Psoas muscle (tissue), 8 donors: ENCODE measurements at regions of chr17 and their contacts with region 1.

Region 1: DNA sequence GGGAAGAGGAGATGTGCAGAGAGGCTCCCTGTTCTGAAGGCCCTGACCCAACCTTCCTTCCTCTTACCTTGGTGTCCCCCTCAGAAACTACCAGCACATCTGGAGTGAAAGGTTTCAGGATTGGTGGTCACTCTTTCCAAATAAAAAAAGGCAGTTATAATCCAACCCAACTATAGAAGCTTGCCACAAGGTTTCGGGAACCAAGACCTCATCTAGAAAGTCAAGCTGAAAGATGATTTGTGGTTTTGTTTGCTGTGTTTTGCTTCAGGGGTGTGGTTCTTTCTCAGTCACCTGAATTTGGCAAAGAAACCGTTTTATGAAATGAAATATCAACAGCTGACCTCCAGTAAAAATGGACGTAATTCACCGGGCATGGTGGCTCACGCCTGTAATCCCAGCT is 19.3 kb downstream of the SHMT1 start:
- DNase-seq: no peak
- ATAC-seq: no peak
- H3K4me3 ChIP-seq: no peak overlapping the region
- H3K27ac ChIP-seq: no peak overlapping the region
- H3K4me1 ChIP-seq: no peaks in the 10 kb centered on the region
- H3K27me3 ChIP-seq: no peaks in the 10 kb centered on the region
- CTCF ChIP-seq: no peak

Region 2: GRCh38 chr17:18093616-18094408 is 250.2 kb before region 1 on chr17:
- intact Hi-C with region 1: no loop called
- DNase-seq: peak; percentile 63 to 92
- ATAC-seq: peak; percentile 76 to 93 (median 88)
- H3K4me3 ChIP-seq: no peak overlapping the region
- H3K27ac ChIP-seq: peak overlapping the region; percentile 68
- H3K4me1 ChIP-seq: peaks cover 7% of the 10 kb centered on the region
- H3K27me3 ChIP-seq: no peaks in the 10 kb centered on the region
- CTCF ChIP-seq: peak; percentile 42

Region 3: GRCh38 chr17:18257982-18258355 is 86.1 kb before region 1 on chr17:
- intact Hi-C with region 1: no loop called
- DNase-seq: peak; percentile 91 to 94
- ATAC-seq: peak; percentile 73 to 77 (median 74)
- H3K4me3 ChIP-seq: peak overlapping the region; percentile 98
- H3K27ac ChIP-seq: peak overlapping the region; percentile 100
- H3K4me1 ChIP-seq: peaks cover 53% of the 10 kb centered on the region
- H3K27me3 ChIP-seq: no peaks in the 10 kb centered on the region
- CTCF ChIP-seq: peak; percentile 6

Region 4: GRCh38 chr17:18285296-18285695 is 58.7 kb before region 1 on chr17:
- intact Hi-C with region 1: loop called in 1 of 2 experiments (anchors 5 kb)
- DNase-seq: no peak
- ATAC-seq: no peak
- H3K4me3 ChIP-seq: no peak overlapping the region
- H3K27ac ChIP-seq: no peak overlapping the region
- H3K4me1 ChIP-seq: no peaks in the 10 kb centered on the region
- H3K27me3 ChIP-seq: no peaks in the 10 kb centered on the region
- CTCF ChIP-seq: no peak